CD8-positive, alpha-beta T cell (primary cell): ENCODE measurements at regions of chr11 and their contacts with region 1.

Region 1: DNA sequence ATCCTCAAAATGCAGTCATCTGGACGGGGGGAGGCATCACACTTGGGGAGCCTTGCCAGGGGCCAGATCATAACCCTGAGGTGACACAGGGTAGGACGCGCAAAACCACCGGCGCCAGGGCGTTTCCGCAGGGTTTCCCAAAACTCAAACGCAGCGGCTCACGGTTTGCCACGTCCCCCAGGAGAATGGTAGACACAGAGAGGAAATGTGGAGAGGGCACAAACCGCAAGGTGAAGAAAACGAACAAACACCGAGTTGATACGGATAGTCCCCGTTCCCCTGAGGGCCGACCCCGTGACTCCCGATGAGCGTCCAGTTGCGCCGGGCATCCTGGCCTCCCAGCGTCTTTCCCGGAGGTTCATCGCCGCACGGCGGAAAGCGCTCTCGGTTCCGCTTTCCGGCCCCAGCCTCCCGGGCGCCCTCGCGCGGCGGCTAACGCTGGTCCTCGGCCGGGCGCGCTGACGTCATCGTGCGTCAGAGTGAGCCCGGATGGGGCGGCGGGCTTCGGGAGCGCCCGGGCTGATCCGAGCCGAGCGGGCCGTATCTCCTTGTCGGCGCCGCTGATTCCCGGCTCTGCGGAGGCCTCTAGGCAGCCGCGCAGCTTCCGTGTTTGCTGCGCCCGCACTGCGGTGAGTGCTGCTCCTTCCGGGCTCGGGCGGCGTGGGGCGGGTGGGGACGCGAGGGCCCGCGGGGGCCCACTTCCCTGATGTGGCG is at the start of gene BIRC2:
- DNase-seq: peak; percentile 92 to 97 (median 95)
- ATAC-seq: peak; percentile 78
- H3K4me3 ChIP-seq: peak within 1 kb of the TSS; percentile 60 to 72
- H3K4me3 Mint-ChIP-seq: peak within 1 kb of the TSS; percentile 98
- H3K27ac ChIP-seq: peak within 1 kb of the TSS; percentile 94
- H3K27ac Mint-ChIP-seq: peak within 1 kb of the TSS; percentile 99
- H3K4me1 ChIP-seq: peaks cover 29% of the 10 kb centered on the region
- H3K4me1 Mint-ChIP-seq: peaks cover 46% of the 10 kb centered on the region
- H3K27me3 ChIP-seq: no peaks in the 10 kb centered on the region
- H3K27me3 Mint-ChIP-seq: no peaks in the 10 kb centered on the region
- CTCF ChIP-seq: peak; percentile 54
- total RNA-seq, gene BIRC2: 161 to 178 TPM

Region 2: DNA sequence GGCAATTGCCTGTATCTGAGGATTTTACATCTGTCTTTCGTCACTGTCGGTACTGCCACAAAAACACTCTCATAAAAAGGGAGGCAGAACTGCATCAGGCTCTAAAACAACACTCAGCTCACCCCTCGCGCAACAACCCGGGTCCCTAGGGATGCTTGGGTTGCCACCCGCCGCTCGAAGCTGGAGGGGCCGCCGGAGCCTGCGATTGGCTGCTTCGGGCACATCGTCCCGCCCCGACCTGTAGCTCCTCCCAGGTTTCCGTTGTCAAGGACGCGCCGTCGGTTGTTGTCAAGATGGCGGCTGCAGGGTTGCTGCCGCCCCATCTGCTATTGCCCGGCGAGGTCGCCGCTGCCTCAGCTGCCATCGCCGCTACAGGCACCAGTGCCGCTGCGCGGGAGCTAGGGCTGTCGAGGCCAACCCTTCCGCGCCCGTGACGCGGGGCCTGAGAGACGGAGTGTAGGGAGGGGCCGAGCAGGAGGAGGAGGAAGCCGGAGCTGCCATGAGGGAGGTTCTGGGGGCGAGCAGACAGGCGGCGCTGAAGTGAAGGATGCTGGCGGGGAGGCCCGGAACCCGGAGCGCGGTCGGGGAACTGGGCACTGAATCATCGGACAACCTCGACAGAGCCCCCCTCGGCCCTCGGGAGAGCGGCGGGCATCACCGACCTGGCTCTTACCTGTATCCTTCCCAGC is 432.0 kb before region 1 on chr11 and contains the start of gene CEP126:
- CTCF ChIA-PET with region 1: no interaction called
- POLR2A ChIA-PET with region 1: no interaction called
- intact Hi-C with region 1: loop called in 1 of 2 experiments (anchors 10 kb)
- DNase-seq: peak; percentile 89 to 96 (median 94)
- ATAC-seq: peak; percentile 89
- H3K4me3 ChIP-seq: peak within 1 kb of the TSS; percentile 79 to 91
- H3K4me3 Mint-ChIP-seq: peak within 1 kb of the TSS; percentile 93
- H3K27ac ChIP-seq: peak within 1 kb of the TSS; percentile 68 to 86
- H3K27ac Mint-ChIP-seq: peak within 1 kb of the TSS; percentile 89
- H3K4me1 ChIP-seq: peaks cover 10% of the 10 kb centered on the region
- H3K4me1 Mint-ChIP-seq: peaks cover 23% of the 10 kb centered on the region
- H3K27me3 ChIP-seq: no peaks in the 10 kb centered on the region
- H3K27me3 Mint-ChIP-seq: peaks cover 6% of the 10 kb centered on the region
- CTCF ChIP-seq: peak; percentile 16
- total RNA-seq, gene CEP126: 0.81 to 0.87 TPM

Region 3: GRCh38 chr11:102317099-102317767 is 29.7 kb before region 1 on chr11 and contains the start of gene BIRC3:
- CTCF ChIA-PET with region 1: interaction called, 9 read pairs
- POLR2A ChIA-PET with region 1: no interaction called
- intact Hi-C with region 1: loop called (anchors 1 kb)
- DNase-seq: peak; percentile 76 to 99 (median 88)
- ATAC-seq: peak; percentile 85
- H3K4me3 ChIP-seq: peak within 1 kb of the TSS; percentile 68 to 80
- H3K4me3 Mint-ChIP-seq: peak within 1 kb of the TSS; percentile 90
- H3K27ac ChIP-seq: peak within 1 kb of the TSS; percentile 82 to 95
- H3K27ac Mint-ChIP-seq: peak within 1 kb of the TSS; percentile 97
- H3K4me1 ChIP-seq: peaks cover 57% of the 10 kb centered on the region
- H3K4me1 Mint-ChIP-seq: peaks cover 79% of the 10 kb centered on the region
- H3K27me3 ChIP-seq: no peaks in the 10 kb centered on the region
- H3K27me3 Mint-ChIP-seq: no peaks in the 10 kb centered on the region
- CTCF ChIP-seq: no peak
- total RNA-seq, gene BIRC3: 88.0 to 90.4 TPM

Region 4: DNA sequence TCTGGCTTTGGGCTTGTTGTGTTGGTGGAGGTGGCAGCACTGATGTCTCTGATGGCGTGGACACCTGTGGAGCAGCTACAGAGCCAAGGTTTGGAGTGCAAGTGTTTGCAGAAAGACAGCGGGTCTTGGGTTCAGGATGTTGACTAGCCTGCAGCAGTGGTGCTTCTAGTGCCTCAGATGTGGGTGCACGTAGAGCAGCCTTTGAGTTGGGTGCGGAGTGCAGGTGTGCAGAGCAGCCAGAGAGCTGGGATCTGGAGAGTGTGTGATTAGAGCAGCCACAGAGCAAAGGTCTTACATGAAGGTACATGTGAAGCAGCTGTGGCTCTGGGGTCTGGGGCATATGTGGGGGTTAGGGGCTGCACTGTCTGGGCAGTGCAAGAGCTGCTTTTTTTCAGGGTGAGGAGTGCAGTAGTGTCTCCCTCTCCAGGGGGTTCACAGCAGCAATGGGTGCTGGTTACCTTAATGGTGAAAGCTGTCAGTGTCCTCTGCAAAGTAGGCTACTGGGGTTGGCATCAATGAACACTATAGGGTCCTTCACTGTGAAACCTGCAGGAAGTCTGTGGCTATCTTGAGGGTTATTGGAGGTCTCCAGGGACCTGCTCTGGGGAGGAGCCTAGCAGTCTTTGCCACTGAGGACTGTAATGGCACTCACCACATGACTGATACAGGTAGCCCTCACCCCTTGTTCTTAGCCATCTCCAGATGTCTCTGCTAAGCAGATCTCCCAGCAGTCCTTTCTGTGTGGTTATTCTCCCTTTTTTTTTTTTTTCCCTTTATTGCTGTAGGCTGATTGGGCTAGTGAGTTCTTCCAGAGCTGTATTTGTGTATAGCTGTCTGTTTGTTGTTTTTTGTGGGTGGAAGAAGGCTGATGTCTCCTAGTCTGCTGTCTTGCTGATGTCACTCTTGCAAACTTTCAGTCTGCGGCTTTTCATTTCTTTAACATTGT is 14.5 kb after region 1 on chr11:
- CTCF ChIA-PET with region 1: interaction called, 20 read pairs
- POLR2A ChIA-PET with region 1: interaction called, 8 read pairs
- intact Hi-C with region 1: loop called (anchors 1 kb)
- DNase-seq: peak; percentile 9 to 85 (median 59)
- ATAC-seq: peak; percentile 77
- H3K4me3 ChIP-seq: peak overlapping the region in 1 of 2 experiments; percentile 26
- H3K4me3 Mint-ChIP-seq: peak overlapping the region; percentile 58
- H3K27ac ChIP-seq: peak overlapping the region; percentile 54 to 80
- H3K27ac Mint-ChIP-seq: peak overlapping the region; percentile 96
- H3K4me1 ChIP-seq: peaks cover 45% of the 10 kb centered on the region
- H3K4me1 Mint-ChIP-seq: peaks cover 64% of the 10 kb centered on the region
- H3K27me3 ChIP-seq: no peaks in the 10 kb centered on the region
- H3K27me3 Mint-ChIP-seq: no peaks in the 10 kb centered on the region
- CTCF ChIP-seq: no peak

Region 5: DNA sequence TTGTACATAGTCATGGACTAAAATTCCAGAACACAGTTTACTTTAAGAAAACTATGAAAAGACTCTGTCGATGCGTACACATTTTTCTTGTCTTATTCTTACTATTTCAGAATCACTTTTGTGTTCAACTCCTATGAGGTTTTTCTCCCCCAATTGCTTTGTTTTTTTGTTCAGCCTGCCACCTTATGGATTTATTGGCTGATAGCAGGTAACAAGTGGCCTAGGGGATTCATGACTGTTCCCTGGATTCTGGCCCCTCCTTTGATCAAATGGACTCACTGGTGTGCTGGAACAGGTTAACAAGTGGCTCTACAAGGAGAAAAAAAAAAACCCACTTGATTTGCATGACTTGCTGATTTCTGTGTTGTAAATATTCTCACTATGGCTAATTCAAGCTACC is 267.6 kb after region 1 on chr11:
- CTCF ChIA-PET with region 1: interaction called, 47 read pairs
- POLR2A ChIA-PET with region 1: interaction called, 3 read pairs
- intact Hi-C with region 1: loop called in 1 of 2 experiments (anchors 1 kb)
- DNase-seq: peak in 1 of 9 experiments; percentile 9
- ATAC-seq: no peak
- H3K4me3 ChIP-seq: no peak overlapping the region
- H3K4me3 Mint-ChIP-seq: no peak overlapping the region
- H3K27ac ChIP-seq: no peak overlapping the region
- H3K27ac Mint-ChIP-seq: no peak overlapping the region
- H3K4me1 ChIP-seq: no peaks in the 10 kb centered on the region
- H3K4me1 Mint-ChIP-seq: peaks cover 3% of the 10 kb centered on the region
- H3K27me3 ChIP-seq: no peaks in the 10 kb centered on the region
- H3K27me3 Mint-ChIP-seq: no peaks in the 10 kb centered on the region
- CTCF ChIP-seq: no peak